ENCODE measurements at regions of chr11 and their contacts with region 1.

Region 1: GRCh38 chr11:6505577-6506240 is 8.6 kb downstream of the DNHD1 start:
- DNase-seq: peak; percentile 58
- ATAC-seq: peak; percentile 85
- H3K4me3 ChIP-seq: no peak overlapping the region
- H3K27ac ChIP-seq: no peak overlapping the region
- H3K4me1 ChIP-seq: no peaks in the 10 kb centered on the region
- H3K27me3 ChIP-seq: no peaks in the 10 kb centered on the region
- CTCF ChIP-seq: peak; percentile 87

Region 2: DNA sequence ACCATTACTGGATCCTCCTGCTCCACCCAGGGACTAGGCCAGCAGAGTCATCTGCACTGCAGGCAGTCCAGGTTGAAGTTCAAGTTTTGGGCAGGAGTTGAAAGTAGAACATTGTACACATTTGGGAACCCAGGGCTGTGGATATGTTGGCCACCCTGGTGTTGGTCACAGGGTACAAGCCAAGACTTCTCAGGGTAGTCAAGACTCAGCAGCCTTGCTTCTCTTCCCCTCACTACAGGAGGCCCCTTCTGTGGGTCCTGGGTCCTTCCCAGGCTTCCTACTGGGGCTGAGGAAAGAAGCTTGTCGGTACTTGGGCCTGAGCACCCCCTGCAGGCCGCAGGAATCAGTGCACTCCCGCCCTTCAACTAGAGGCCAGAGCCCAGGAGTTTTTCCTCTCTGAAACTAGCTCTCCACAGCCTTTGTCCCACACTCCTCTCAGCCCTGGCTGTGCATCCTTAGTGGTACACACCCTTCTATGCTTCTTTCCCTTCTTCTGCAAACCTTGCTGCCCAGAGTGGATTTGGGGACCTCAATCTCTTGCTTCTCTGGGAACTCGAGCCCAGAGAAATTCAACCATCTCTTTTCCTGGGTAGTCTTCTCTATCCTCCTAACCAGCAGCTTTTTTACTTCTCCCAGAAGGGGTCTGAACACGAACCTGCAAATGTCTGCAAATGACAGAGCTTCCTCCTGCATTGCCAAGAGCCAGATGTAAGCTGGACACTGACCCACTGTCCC is 62.3 kb before region 1 on chr11:
- CTCF ChIA-PET with region 1: no interaction called
- POLR2A ChIA-PET with region 1: no interaction called
- intact Hi-C with region 1: loop called (anchors 1 kb)
- DNase-seq: peak; percentile 58
- ATAC-seq: peak; percentile 80
- H3K4me3 ChIP-seq: no peak overlapping the region
- H3K27ac ChIP-seq: no peak overlapping the region
- H3K4me1 ChIP-seq: no peaks in the 10 kb centered on the region
- H3K27me3 ChIP-seq: no peaks in the 10 kb centered on the region
- CTCF ChIP-seq: peak; percentile 84

Region 3: GRCh38 chr11:6473481-6474422 is 32.0 kb before region 1 on chr11 and contains the start of gene TRIM3:
- CTCF ChIA-PET with region 1: no interaction called
- POLR2A ChIA-PET with region 1: no interaction called
- intact Hi-C with region 1: loop called (anchors 1 kb)
- DNase-seq: peak; percentile 82
- ATAC-seq: peak; percentile 73
- H3K4me3 ChIP-seq: peak within 1 kb of the TSS; percentile 95
- H3K27ac ChIP-seq: peak within 1 kb of the TSS; percentile 84
- H3K4me1 ChIP-seq: peaks cover 28% of the 10 kb centered on the region
- H3K27me3 ChIP-seq: no peaks in the 10 kb centered on the region
- CTCF ChIP-seq: peak; percentile 49; the same call in 1 of the 2 replicates
- total RNA-seq, gene TRIM3: 20.3 and 24.7 TPM in 2 replicates

Region 4: DNA sequence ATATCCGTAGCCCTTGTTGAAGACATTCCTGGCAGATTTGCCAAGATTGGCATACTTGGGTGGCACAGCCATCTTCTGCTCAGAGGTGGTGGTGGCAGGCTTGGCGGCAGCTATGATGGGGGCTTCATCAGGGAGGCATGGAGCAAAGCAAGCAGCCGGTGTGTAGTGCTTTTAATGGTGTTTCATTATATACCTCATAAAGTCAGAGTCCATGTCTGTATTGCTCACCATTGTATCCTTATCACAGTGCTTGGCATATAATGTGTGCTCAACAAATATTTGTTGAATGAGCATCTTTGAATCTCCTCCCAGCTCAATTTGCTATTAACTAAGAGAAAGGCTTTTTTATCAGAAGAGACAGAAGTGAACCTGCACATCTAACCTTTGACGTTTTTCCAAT is 16.4 kb before region 1 on chr11:
- CTCF ChIA-PET with region 1: no interaction called
- POLR2A ChIA-PET with region 1: no interaction called
- intact Hi-C with region 1: loop called (anchors 2 kb)
- DNase-seq: no peak
- ATAC-seq: peak; percentile 91
- H3K4me3 ChIP-seq: no peak overlapping the region
- H3K27ac ChIP-seq: no peak overlapping the region
- H3K4me1 ChIP-seq: no peaks in the 10 kb centered on the region
- H3K27me3 ChIP-seq: no peaks in the 10 kb centered on the region
- CTCF ChIP-seq: no peak

Region 5: GRCh38 chr11:6646071-6646470 is 140.4 kb after region 1 on chr11:
- CTCF ChIA-PET with region 1: no interaction called
- POLR2A ChIA-PET with region 1: no interaction called
- intact Hi-C with region 1: no loop called
- DNase-seq: no peak
- ATAC-seq: no peak
- H3K4me3 ChIP-seq: no peak overlapping the region
- H3K27ac ChIP-seq: no peak overlapping the region
- H3K4me1 ChIP-seq: no peaks in the 10 kb centered on the region; the same call in 1 of the 2 replicates
- H3K27me3 ChIP-seq: peaks cover 34% of the 10 kb centered on the region
- CTCF ChIP-seq: no peak